Transverse colon (tissue), 4 donors: ENCODE measurements at regions of chr7 and their contacts with region 1.

Region 1: DNA sequence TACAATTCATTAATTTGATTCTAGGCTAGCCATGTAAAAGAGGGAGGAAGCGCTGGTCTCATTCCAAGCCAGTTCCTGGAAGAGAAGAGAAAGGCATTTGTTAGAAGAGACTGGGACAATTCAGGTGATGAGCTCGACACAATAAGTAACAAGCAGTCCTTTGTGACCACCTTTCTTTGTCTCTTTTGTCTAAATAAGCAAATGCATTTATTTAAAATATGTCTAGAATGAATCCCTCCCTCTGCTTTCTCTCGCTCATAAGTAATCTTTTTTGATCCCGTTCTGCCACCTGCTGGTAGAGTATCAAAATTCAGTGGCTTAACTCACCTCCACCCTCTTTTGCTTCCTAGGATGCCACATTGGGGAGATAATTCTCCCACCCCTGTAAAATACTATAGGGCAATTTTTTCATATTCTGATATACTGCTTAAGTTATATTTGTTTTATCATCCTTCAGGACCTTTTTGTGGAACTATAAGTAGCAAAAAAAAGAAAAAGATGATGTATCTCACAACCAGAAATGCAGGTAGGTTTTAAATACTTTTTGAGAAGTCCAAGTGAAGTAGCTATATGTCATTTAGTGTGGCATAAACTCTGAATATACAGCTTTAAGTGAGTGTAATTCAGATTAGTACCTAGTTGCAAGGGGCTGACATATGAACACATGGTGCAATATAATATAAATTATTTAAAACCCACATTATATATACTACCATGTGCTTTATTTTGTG is 91.5 kb downstream of the GSDME start:
- DNase-seq: peak; percentile 11
- H3K4me3 ChIP-seq: no peak overlapping the region
- H3K27ac ChIP-seq: no peak overlapping the region
- H3K4me1 ChIP-seq: peaks cover 0 to 8% (median 0%) of the 10 kb centered on the region in 4 donors
- H3K27me3 ChIP-seq: no peaks in the 10 kb centered on the region
- CTCF ChIP-seq: peak; percentile 62 to 71 (median 65)
- EP300 ChIP-seq: no peak
- POLR2A ChIP-seq: no peak

Region 2: DNA sequence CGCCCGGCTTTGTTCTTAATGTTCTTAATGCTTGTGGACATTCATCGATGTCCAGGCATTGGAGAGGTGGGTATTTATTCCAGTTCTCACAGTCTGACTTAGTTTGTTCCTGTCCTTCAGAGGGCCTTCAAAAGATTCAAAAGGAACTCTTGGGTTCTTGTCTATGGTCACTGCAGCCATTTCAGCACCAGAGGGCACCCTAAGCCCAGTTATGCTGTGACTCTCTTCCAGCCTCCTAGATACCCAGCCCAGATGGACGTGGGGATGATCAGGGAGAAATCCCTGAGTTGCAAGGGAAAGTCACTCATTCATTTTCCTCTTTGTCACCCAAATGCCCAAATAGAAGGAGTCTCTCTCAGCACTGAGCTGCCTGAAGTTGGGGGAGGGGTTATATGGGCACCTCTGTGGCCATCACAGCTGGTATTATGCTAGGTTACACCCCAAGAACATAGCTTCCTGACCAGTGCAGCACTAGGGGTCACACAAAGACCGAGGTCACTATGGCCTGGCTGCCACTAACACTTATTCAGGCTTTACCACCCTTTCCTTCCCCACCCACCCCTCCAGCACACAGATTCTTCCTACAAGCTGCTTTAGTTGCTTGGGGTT is 1095.0 kb before region 1 on chr7:
- in situ Hi-C with region 1: loop called in 2 of 4 experiments (anchors 25 kb)
- intact Hi-C with region 1: no loop called
- DNase-seq: peak; percentile 82
- H3K4me3 ChIP-seq: no peak overlapping the region
- H3K27ac ChIP-seq: no peak overlapping the region
- H3K4me1 ChIP-seq: no peaks in the 10 kb centered on the region
- H3K27me3 ChIP-seq: no peaks in the 10 kb centered on the region
- CTCF ChIP-seq: peak; percentile 72 to 83 (median 76)
- EP300 ChIP-seq: no peak
- POLR2A ChIP-seq: no peak

Region 3: DNA sequence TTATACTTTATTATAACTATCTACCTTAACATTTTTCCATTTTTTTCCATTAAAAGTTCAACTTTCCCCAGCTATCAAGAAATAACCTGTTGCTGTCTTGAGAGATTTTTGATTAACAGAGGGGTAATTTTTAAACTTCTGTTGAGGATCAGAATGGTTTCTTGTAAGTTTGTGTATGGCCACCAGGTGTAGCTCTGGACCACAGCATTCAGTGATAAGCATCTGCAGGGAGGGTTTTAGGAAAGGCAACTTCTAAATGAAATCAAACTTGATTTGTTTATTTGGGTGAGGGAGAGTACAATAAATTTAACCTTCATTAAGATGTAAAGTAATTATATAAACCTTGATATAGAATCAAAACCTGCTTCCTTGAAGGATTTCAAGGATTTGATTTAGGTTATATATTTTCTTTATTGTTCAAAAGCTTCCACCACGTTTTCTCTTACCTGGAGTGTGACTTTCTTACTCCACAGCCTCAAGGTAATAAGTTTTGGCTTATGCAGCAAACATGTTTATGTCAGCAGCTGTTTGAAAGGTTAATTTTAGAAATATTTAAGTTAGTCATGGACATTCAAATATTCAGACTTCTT is 802.4 kb before region 1 on chr7:
- in situ Hi-C with region 1: loop called in 2 of 4 experiments (anchors 25 kb)
- intact Hi-C with region 1: no loop called
- DNase-seq: no peak
- H3K4me3 ChIP-seq: no peak overlapping the region
- H3K27ac ChIP-seq: no peak overlapping the region
- H3K4me1 ChIP-seq: no peaks in the 10 kb centered on the region
- H3K27me3 ChIP-seq: no peaks in the 10 kb centered on the region
- CTCF ChIP-seq: peak; percentile 30 to 53 (median 40)
- EP300 ChIP-seq: no peak
- POLR2A ChIP-seq: no peak

Region 4: DNA sequence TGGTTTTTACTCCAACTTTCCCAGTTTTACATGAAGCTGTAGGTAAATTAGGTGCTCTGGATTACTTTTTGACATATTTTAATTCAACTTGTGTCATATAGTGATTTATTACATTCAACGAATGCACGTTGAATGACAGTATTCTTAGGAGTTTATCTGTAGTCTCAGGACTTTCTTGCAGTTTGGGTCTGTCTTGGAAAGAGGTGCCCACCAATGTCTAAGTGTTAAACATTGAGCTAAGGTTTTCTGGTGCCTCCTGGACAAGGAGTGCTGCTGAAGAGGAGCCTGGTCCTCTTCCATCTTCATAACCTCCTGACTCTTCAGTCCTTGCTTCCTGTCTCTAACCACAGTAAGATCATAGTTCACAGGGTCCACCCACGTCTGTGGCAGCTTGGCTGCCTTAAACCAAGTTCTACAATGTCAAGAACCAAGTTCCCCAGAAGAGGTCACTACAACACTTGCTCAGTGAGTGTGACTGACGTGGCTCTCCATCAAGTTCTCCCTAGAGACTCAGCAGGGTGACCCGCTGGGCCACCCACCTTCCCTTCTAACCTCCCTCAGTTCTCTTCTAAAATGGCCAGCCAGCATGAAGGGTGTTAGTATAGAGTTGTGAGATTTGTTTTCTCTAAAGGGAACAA is 375.6 kb before region 1 on chr7:
- in situ Hi-C with region 1: loop called in 1 of 4 experiments (anchors 25 kb)
- intact Hi-C with region 1: no loop called
- DNase-seq: no peak
- H3K4me3 ChIP-seq: no peak overlapping the region
- H3K27ac ChIP-seq: no peak overlapping the region
- H3K4me1 ChIP-seq: peaks cover 0 to 2% (median 0%) of the 10 kb centered on the region in 4 donors
- H3K27me3 ChIP-seq: peaks cover 47% of the 10 kb centered on the region
- CTCF ChIP-seq: peak in 2 of 5 experiments; percentile 8 to 29
- EP300 ChIP-seq: no peak
- POLR2A ChIP-seq: no peak

Region 5: DNA sequence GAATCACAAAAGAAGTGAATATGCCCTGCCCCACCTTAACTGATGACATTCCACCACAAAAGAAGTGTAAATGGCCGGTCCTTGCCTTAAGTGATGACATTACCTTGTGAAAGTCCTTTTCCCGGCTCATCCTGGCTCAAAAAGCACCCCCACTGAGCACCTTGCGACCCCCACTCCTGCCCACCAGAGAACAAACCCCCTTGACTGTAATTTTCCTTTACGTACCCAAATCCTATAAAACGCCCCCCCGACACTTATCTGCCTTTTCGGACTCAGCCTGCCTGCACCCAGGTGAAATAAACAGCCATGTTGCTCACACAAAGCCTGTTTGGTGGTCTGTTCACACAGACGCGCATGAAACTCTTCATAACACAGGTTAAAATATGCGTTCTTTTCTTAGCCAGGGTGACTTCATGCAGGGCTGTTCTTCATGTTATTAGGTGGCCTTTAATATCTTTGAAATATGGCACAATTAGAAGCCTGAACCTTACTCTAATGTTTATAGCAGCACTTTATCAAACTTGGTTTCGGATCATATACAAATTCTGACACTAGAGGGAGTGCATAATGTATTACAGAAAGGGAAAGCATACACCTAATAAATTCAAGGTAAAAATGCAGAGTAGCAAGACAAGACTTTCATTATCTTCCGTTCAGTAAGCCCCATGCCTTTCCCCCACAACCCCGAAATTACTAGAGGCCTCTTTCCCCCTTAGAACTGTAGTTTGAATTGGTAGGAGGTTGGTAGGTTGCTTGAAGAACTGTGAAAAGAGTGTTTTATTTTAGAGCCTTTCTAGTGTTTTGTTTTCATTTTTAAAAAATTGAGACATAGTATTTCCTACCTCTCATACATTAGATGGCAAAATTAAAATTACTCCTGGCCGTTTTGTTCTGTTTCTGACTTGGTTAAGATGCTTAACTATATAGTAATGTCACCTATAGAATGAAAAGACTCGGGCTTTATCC is 263.8 kb before region 1 on chr7:
- in situ Hi-C with region 1: loop called in 2 of 4 experiments (anchors 25 kb)
- intact Hi-C with region 1: no loop called
- DNase-seq: no peak
- H3K4me3 ChIP-seq: no peak overlapping the region
- H3K27ac ChIP-seq: no peak overlapping the region
- H3K4me1 ChIP-seq: no peaks in the 10 kb centered on the region
- H3K27me3 ChIP-seq: no peaks in the 10 kb centered on the region
- CTCF ChIP-seq: peak in 3 of 5 experiments; percentile 19 to 29 (median 22)
- EP300 ChIP-seq: no peak
- POLR2A ChIP-seq: no peak